Activated CD4-positive, alpha-beta memory T cell treated with anti-CD3 and anti-CD28 coated beads, Interleukin-2, amount 10 ng/mL, durations not matched to agents 7 days and 5 days (primary cell): ENCODE measurements at regions of chr3 and their contacts with region 1.

Region 1: DNA sequence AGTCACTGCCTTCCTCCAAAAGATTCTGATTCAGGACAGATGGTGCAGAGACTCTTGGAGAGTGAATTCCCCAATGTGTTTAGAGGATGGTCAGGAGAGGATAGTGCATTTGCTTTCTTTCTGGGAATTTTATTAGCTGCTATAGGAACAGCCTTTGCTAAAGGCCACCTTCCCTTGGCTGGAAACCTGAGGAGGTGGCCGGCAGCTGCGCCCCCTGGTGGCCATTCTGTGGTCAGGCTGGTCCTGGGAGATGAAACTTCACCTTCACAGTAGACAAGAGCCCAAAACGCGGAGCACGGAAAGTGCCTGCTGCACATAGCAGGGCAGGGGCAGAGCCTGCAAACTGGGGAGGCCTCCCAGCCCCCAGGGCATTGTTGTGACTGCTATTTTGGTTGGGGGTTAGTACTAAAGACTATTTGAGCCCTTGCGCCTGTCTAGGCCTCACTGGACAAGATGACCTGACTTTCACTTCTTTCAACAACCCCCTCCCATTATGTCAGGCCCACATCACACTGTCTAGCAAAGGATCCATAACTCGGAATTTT is 34.3 kb downstream of the SEC22C start:
- DNase-seq: peak; percentile 66
- H3K4me3 Mint-ChIP-seq: no peak overlapping the region
- H3K27ac Mint-ChIP-seq: no peak overlapping the region
- H3K4me1 Mint-ChIP-seq: peaks cover 3% of the 10 kb centered on the region
- H3K27me3 Mint-ChIP-seq: no peaks in the 10 kb centered on the region

Region 2: GRCh38 chr3:42535981-42536790 is 11.3 kb before region 1 on chr3:
- CTCF ChIA-PET with region 1: interaction called, 70 read pairs
- POLR2A ChIA-PET with region 1: interaction called, 8 read pairs
- DNase-seq: peak; percentile 56
- H3K4me3 Mint-ChIP-seq: no peak overlapping the region
- H3K27ac Mint-ChIP-seq: no peak overlapping the region
- H3K4me1 Mint-ChIP-seq: peaks cover 18% of the 10 kb centered on the region
- H3K27me3 Mint-ChIP-seq: no peaks in the 10 kb centered on the region